Activated T-helper 2 cell treated with anti-CD3 and anti-CD28 coated beads, Interferon-gamma antibody, Interleukin-2, Interleukin-4, amounts not matched to agents 10 μg/mL and 5 μg/mL and 100 μg/mL, durations not matched to agents 14 hours and 24 hours and 36 hours (primary cell): ENCODE measurements at regions of chr18 and their contacts with region 1.

Region 1: GRCh38 chr18:34122724-34123334 is 101.9 kb downstream of the NOL4 start:
- DNase-seq: no peak
- H3K4me3 Mint-ChIP-seq: no peak overlapping the region
- H3K27ac Mint-ChIP-seq: no peak overlapping the region
- H3K4me1 Mint-ChIP-seq: no peaks in the 10 kb centered on the region
- H3K27me3 Mint-ChIP-seq: no peaks in the 10 kb centered on the region

Region 2: DNA sequence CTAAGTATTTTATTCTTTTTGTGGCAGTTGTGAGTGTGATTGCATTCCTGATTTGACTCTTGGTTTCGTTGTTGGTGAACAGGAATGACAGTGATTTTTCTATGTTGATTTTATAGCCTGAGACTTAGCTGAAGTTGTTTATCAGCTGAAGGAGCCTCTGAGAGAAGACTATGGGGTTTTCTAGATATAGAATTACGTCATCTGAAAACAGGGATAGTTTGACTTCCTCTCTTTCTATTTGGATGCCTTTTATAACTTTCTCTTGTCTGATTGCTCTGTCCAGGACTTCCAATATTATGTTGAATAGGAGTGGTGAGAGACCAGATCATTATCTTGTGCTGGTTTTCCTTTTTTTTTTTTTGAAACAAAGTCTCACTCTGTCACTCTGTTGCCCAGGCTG is 119.9 kb after region 1 on chr18:
- intact Hi-C with region 1: no loop called
- DNase-seq: no peak
- H3K4me3 Mint-ChIP-seq: no peak overlapping the region
- H3K27ac Mint-ChIP-seq: no peak overlapping the region
- H3K4me1 Mint-ChIP-seq: no peaks in the 10 kb centered on the region
- H3K27me3 Mint-ChIP-seq: no peaks in the 10 kb centered on the region

Region 3: DNA sequence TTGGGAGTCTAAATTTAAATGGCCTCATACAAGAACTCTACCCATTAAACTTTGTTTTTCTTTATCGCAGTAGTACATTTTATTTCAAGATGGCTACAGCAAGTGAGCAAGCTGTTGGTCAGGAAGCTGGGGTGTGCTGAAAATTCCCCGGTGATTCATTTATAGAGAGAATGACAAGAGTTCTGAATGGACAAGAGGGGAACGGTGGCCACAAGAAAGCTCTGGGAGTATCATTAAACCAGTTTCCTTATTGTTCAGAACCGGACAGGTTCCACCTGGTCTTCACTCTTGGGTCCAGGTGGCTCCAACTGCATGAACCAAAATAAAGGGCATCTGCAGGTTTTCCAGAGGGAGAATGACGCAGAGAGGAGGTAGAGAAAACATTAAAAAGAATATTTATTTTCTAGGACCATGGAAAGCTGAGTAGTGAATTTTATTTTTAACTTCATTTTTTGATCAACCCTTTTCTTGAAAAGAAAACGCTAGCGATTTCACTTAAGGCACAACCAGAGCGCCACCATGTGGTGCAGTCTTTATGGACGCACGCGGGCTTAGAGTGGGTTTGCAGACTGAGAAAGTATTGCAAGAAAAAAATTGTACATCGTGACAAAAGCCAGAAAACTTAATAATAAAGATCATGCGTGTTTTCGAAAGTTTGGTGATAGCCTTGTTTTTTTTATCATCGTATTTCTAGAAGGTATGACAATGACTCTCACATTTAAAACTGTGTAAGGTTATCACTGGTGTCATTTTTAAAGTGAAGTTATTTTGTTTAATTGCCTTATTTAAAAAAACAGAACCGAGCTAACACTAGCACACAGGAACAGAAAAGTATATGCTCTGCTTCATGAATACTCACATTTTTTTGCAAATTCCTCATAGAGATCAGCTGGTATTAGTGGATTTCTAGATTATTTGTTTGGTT is 199.8 kb after region 1 on chr18:
- intact Hi-C with region 1: loop called (anchors 5 kb)
- DNase-seq: no peak
- H3K4me3 Mint-ChIP-seq: no peak overlapping the region
- H3K27ac Mint-ChIP-seq: no peak overlapping the region
- H3K4me1 Mint-ChIP-seq: no peaks in the 10 kb centered on the region
- H3K27me3 Mint-ChIP-seq: no peaks in the 10 kb centered on the region

Region 4: GRCh38 chr18:34695310-34695709 is 572.5 kb after region 1 on chr18:
- intact Hi-C with region 1: no loop called
- DNase-seq: no peak
- H3K4me3 Mint-ChIP-seq: no peak overlapping the region
- H3K27ac Mint-ChIP-seq: no peak overlapping the region
- H3K4me1 Mint-ChIP-seq: no peaks in the 10 kb centered on the region
- H3K27me3 Mint-ChIP-seq: no peaks in the 10 kb centered on the region